A549 (cell line): ENCODE measurements at regions of chr6 and their contacts with region 1.

Region 1: DNA sequence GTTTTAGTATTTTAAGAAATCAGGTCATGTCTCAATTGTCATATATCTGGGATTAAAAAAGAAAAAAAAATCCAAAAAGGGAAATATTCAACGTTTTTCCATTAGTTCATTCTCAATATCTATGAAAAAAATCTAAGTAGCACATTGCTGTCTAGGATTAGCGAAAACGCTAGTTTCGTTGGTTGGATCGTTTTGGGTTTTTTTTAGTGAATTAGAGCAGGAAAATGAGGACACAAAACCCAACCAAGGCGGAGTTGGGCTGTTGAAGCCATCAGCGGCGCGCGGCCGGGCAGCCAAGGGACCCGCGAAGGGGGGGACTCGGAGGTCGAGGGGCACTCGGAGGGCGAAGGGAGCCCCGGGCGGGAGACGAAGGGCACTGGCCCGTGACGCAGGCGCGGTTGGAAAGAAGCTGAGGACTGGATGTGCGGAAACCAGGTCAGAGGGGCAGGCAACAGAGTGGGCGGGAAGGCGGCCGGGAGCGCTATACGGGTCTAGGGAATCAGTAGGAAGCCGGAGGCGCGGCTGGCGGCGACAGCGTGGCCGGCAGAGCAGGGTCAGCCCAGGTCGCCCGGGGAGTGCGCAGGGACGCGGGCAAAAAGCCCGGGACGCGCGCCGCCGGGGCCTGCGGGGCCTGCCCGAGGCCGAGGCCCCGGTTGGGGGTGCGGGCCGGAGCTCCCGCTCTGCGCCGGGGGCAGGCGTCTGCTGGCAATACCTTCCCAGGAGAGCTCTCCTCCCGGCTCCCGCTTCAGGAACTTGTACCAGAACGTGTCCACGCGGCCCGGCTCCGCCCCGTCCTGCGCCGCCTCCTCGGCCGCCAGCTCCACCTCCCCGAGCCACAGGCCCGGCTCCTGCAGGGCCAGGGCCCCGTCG is 599 bp downstream of the EPM2A start:
- DNase-seq: peak; percentile 51 to 91
- ATAC-seq: peak; percentile 91 to 95
- H3K4me3 ChIP-seq: peak overlapping the region; percentile 48
- H3K27ac ChIP-seq: peak overlapping the region; percentile 91 to 98
- H3K4me1 ChIP-seq: peaks cover 11% of the 10 kb centered on the region; the same call in 2 of the 3 replicates
- CTCF ChIP-seq: no peak
- EP300 ChIP-seq: no peak
- POLR2A ChIP-seq: peak; percentile 51
- RAD21 ChIP-seq: no peak

Region 2: GRCh38 chr6:145721144-145721543 is 13.6 kb before region 1 on chr6:
- CTCF ChIA-PET with region 1: no interaction called
- POLR2A ChIA-PET with region 1: interaction called, 10 read pairs
- DNase-seq: no peak
- ATAC-seq: no peak
- H3K4me3 ChIP-seq: no peak overlapping the region
- H3K27ac ChIP-seq: no peak overlapping the region
- H3K4me1 ChIP-seq: no peaks in the 10 kb centered on the region
- CTCF ChIP-seq: no peak
- EP300 ChIP-seq: no peak
- POLR2A ChIP-seq: no peak
- RAD21 ChIP-seq: no peak

Region 3: GRCh38 chr6:145749632-145750031 is 14.9 kb after region 1 on chr6:
- CTCF ChIA-PET with region 1: no interaction called
- POLR2A ChIA-PET with region 1: interaction called, 10 read pairs
- DNase-seq: peak in 1 of 2 experiments; percentile 49
- ATAC-seq: peak in 1 of 2 experiments; percentile 74; a peak in 3 of 6 replicates
- H3K4me3 ChIP-seq: no peak overlapping the region
- H3K27ac ChIP-seq: peak overlapping the region; percentile 73 to 75
- H3K4me1 ChIP-seq: peaks cover 10% of the 10 kb centered on the region
- CTCF ChIP-seq: no peak
- EP300 ChIP-seq: no peak
- POLR2A ChIP-seq: no peak
- RAD21 ChIP-seq: no peak

Region 4: GRCh38 chr6:145814501-145815308 is 80.0 kb after region 1 on chr6 and contains the start of gene FBXO30:
- CTCF ChIA-PET with region 1: interaction called, 3 read pairs
- POLR2A ChIA-PET with region 1: interaction called, 69 read pairs
- DNase-seq: peak; percentile 49 to 85
- ATAC-seq: peak; percentile 89
- H3K4me3 ChIP-seq: peak within 1 kb of the TSS; percentile 78
- H3K27ac ChIP-seq: peak within 1 kb of the TSS; percentile 98 to 100
- H3K4me1 ChIP-seq: peaks cover 27% of the 10 kb centered on the region; the same call in 2 of the 3 replicates
- CTCF ChIP-seq: no peak
- EP300 ChIP-seq: no peak
- POLR2A ChIP-seq: peak; percentile 67
- RAD21 ChIP-seq: no peak
- polyA plus RNA-seq, gene FBXO30: 8.5 and 10.4 TPM in 2 replicates

Region 5: DNA sequence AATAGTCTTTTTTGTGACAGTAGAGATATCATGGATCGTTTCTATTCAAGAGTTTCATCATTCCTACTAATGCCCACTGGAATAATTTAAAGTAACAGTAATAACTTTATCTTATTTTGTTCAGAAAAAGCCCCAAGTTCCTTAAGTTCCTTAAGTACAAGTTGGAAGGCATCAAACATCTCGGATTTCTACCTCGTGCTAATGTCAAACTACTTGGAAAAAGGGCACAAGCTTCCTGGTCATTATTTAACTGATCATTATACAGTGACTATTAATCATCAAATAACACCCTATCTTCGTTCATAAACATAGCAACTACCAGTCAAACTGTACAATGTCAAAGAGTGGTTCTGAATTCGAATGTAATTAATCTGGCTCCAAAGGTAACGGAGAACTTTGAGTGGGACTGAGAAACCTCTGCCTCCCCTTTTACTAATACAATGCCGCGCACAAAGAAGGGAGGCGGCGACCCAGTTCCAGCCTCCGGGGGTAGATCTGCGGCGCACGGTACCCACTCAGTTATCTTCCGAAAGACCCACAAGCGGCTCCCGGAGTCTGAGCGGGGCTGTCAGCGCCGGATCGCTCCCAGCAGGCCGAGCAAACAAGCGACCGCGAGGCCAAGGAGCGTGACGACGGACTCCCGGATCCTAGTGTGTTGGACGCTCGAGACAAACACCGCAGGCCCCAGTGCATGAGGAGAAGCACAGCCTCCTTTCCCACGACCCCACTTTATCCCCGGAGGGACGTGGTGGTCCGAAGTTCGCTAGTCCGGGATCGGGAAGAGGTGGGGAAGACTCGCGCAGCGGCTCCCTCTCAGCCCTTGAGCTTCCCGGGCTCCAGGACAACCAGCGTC is 228.7 kb after region 1 on chr6:
- CTCF ChIA-PET with region 1: no interaction called
- POLR2A ChIA-PET with region 1: interaction called, 11 read pairs
- DNase-seq: peak; percentile 27 to 38
- ATAC-seq: peak; percentile 71 to 78
- H3K4me3 ChIP-seq: peak overlapping the region; percentile 97
- H3K27ac ChIP-seq: peak overlapping the region; percentile 86 to 90
- H3K4me1 ChIP-seq: peaks cover 15% of the 10 kb centered on the region; the same call in 2 of the 3 replicates
- CTCF ChIP-seq: no peak
- EP300 ChIP-seq: no peak
- POLR2A ChIP-seq: no peak
- RAD21 ChIP-seq: no peak